Activated CD4-positive, alpha-beta memory T cell treated with anti-CD3 and anti-CD28 coated beads for 36 hours (primary cell): ENCODE measurements at regions of chr3 and their contacts with region 1.

Region 1: GRCh38 chr3:14203521-14204079 is 25.0 kb downstream of the LSM3 start:
- DNase-seq: peak; percentile 48
- H3K4me3 Mint-ChIP-seq: no peak overlapping the region
- H3K27ac Mint-ChIP-seq: no peak overlapping the region
- H3K4me1 Mint-ChIP-seq: peaks cover 2% of the 10 kb centered on the region
- H3K27me3 Mint-ChIP-seq: no peaks in the 10 kb centered on the region

Region 2: GRCh38 chr3:14178247-14179113 is 25.1 kb before region 1 on chr3 and contains the starts of genes LSM3 and XPC:
- CTCF ChIA-PET with region 1: interaction called, 12 read pairs
- POLR2A ChIA-PET with region 1: interaction called, 4 read pairs
- intact Hi-C with region 1: no loop called
- DNase-seq: peak; percentile 98
- H3K4me3 Mint-ChIP-seq: peak within 1 kb of the TSS; percentile 87
- H3K27ac Mint-ChIP-seq: peak within 1 kb of the TSS; percentile 89
- H3K4me1 Mint-ChIP-seq: peaks cover 63% of the 10 kb centered on the region
- H3K27me3 Mint-ChIP-seq: no peaks in the 10 kb centered on the region
- total RNA-seq, gene LSM3: 22.1 to 22.9 TPM
- total RNA-seq, gene XPC: 27.8 to 31.6 TPM

Region 3: DNA sequence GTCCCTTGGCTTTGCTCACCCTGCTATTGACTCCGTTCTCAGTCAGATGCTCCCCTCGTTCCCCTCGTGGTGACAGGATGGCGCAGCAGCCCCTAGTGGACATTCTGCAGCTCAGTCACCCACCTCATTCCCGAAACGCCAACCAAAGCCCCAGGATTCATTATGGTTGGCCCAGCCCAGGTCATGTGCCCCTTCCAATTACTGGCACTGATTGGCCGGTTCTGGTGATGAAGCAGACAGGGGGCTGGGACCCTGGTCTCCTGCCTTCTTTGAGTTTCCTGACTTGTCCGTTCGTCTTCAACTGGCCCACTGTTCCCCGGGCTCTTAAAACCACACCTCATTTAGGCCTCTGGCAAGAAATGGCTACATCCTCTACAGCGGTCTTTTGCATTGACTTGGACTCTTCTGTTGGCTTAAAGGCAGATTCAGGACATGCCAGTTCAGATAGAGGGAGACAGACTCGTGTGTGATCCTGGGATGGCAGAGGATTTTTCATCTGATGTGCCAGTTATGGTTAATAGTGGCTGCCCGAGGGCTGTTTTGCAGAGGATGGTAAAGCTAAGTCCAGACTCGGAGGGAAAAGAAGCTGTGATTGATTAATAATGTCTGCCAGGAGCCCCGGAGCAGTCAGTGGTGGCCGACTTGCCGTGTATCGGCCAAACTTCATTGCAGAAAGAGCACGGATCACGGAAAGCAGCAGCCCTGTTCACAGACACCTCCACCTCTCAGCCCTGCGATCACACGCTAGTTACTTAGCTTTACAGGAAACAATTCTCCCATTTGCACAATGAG is 12.9 kb after region 1 on chr3:
- CTCF ChIA-PET with region 1: interaction called, 43 read pairs
- POLR2A ChIA-PET with region 1: no interaction called
- intact Hi-C with region 1: no loop called
- DNase-seq: peak; percentile 32
- H3K4me3 Mint-ChIP-seq: peak overlapping the region; percentile 44
- H3K27ac Mint-ChIP-seq: no peak overlapping the region
- H3K4me1 Mint-ChIP-seq: no peaks in the 10 kb centered on the region
- H3K27me3 Mint-ChIP-seq: no peaks in the 10 kb centered on the region

Region 4: GRCh38 chr3:14261229-14261628 is 57.6 kb after region 1 on chr3:
- CTCF ChIA-PET with region 1: interaction called, 15 read pairs
- POLR2A ChIA-PET with region 1: no interaction called
- intact Hi-C with region 1: loop called (anchors 2 kb)
- DNase-seq: peak; percentile 83
- H3K4me3 Mint-ChIP-seq: no peak overlapping the region
- H3K27ac Mint-ChIP-seq: no peak overlapping the region
- H3K4me1 Mint-ChIP-seq: no peaks in the 10 kb centered on the region
- H3K27me3 Mint-ChIP-seq: peaks cover 16% of the 10 kb centered on the region

Region 5: DNA sequence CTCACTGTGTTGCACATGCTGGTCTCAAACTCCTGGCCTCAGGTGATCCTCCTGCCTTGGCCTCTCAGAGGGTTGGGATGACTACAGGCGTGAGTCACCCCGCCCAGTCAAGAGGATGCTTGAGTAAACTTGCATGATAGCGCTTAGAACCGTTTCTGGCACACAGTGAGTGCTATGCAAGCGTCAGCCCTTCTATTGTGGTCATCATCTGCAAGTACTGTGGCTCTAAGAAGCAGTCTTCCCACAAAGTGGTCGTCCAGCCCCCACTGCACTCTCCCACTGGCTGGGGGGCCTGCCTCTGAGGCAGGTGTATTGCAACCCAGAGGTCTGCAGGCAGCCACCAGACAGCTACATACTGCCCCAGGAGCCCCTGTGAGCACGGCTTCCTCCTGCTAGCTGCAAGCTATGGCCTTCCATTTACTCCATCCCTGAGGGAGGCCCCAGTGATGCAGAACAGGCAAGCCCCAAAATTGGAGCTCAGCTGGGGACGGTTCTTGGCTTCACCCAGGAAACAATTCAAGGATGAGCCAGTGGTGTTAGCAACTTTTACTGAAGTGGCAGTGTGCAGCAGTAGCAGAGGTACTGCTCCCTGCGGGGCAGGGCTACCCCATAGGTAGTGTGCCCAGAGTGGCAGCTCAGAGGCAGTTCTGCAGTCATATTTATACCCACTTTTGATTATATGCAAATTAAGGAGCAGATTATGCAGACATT is 70.5 kb after region 1 on chr3:
- CTCF ChIA-PET with region 1: no interaction called
- POLR2A ChIA-PET with region 1: no interaction called
- intact Hi-C with region 1: no loop called
- DNase-seq: peak; percentile 20
- H3K4me3 Mint-ChIP-seq: no peak overlapping the region
- H3K27ac Mint-ChIP-seq: no peak overlapping the region
- H3K4me1 Mint-ChIP-seq: no peaks in the 10 kb centered on the region
- H3K27me3 Mint-ChIP-seq: no peaks in the 10 kb centered on the region

Region 6: GRCh38 chr3:14351617-14352001 is 148.0 kb after region 1 on chr3:
- CTCF ChIA-PET with region 1: no interaction called
- POLR2A ChIA-PET with region 1: no interaction called
- intact Hi-C with region 1: no loop called
- DNase-seq: no peak
- H3K4me3 Mint-ChIP-seq: no peak overlapping the region
- H3K27ac Mint-ChIP-seq: no peak overlapping the region
- H3K4me1 Mint-ChIP-seq: no peaks in the 10 kb centered on the region
- H3K27me3 Mint-ChIP-seq: no peaks in the 10 kb centered on the region

Region 7: GRCh38 chr3:14921078-14921616 is 717.5 kb after region 1 on chr3:
- CTCF ChIA-PET with region 1: interaction called, 15 read pairs
- POLR2A ChIA-PET with region 1: no interaction called
- intact Hi-C with region 1: no loop called
- DNase-seq: peak; percentile 88
- H3K4me3 Mint-ChIP-seq: no peak overlapping the region
- H3K27ac Mint-ChIP-seq: no peak overlapping the region
- H3K4me1 Mint-ChIP-seq: no peaks in the 10 kb centered on the region
- H3K27me3 Mint-ChIP-seq: no peaks in the 10 kb centered on the region